GM12878 (cell line): ENCODE measurements at regions of chr12 and their contacts with region 1.

Region 1: DNA sequence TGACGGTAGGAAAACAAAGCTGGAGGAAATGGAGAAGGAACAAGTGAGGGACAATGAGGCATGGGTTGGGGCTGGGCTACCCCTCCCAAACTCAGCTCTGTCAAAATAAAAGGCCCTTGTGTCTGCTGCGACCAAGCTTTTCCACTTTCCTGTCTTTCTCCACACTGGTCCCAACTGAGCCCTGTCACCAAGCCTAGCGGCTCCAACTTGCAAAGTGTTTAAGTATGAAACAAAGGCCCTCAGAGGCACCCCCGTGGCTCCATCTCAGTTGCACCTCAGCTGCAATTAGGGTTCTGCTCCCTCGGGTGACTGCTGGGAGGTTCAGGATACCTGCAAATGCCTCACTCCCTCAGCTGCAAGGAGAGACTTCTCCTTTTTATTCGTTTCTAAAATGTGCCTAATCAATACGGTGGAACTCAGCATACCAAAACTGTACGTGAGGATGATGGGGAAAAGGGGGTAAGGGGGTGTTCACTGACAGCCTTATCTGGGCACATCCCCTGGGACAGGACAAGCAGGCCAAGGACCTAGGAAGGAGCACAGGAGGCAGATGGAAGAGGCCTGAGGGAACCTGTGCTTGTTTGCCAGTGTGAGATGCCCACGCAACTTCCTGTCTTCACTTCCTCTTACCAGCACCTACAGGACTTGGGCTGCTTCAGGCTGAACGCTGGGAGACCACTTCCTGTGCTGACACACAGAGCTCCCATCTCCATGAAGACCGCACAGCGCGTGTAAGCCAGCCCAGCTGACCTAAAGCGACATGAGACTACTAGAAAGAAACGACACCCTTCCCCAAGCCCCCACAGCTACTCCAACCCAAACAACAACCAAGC is 8.9 kb downstream of the VAMP1 start:
- DNase-seq: peak; percentile 95
- ATAC-seq: peak; percentile 92
- H3K4me3 ChIP-seq: peak overlapping the region; percentile 33; the same call in 1 of the 2 replicates
- H3K27ac ChIP-seq: peak overlapping the region; percentile 89
- H3K4me1 ChIP-seq: peaks cover 51% of the 10 kb centered on the region
- H3K27me3 ChIP-seq: no peaks in the 10 kb centered on the region
- CTCF ChIP-seq: no peak
- EP300 ChIP-seq: peak; percentile 63 to 88; a peak in 3 of 4 replicates
- POLR2A ChIP-seq: peak; percentile 72
- RAD21 ChIP-seq: no peak

Region 2: GRCh38 chr12:6323340-6323994 is 138.2 kb before region 1 on chr12:
- CTCF ChIA-PET with region 1: interaction called, 27 read pairs
- POLR2A ChIA-PET with region 1: interaction called, 3 read pairs
- RAD21 ChIA-PET with region 1: interaction called, 15 read pairs
- SMC1A ChIA-PET with region 1: interaction called, 14 read pairs
- in situ Hi-C with region 1: no loop called
- intact Hi-C with region 1: loop called (anchors 5 kb)
- DNase-seq: peak; percentile 71
- ATAC-seq: peak; percentile 87
- H3K4me3 ChIP-seq: no peak overlapping the region
- H3K27ac ChIP-seq: peak overlapping the region; percentile 79
- H3K4me1 ChIP-seq: peaks cover 31% of the 10 kb centered on the region
- H3K27me3 ChIP-seq: no peaks in the 10 kb centered on the region
- CTCF ChIP-seq: peak; percentile 38 to 45 (median 45); a peak in 5 of 6 replicates
- EP300 ChIP-seq: peak; percentile 46 to 53; a peak in 1 of 4 replicates
- POLR2A ChIP-seq: 0 out of 2 replicates have a peak, but pooled peaks have one; percentile 18
- RAD21 ChIP-seq: peak; percentile 34

Region 3: GRCh38 chr12:6434205-6435140 is 27.1 kb before region 1 on chr12:
- CTCF ChIA-PET with region 1: interaction called, 62 read pairs
- POLR2A ChIA-PET with region 1: interaction called, 384 read pairs
- RAD21 ChIA-PET with region 1: interaction called, 319 read pairs
- SMC1A ChIA-PET with region 1: interaction called, 59 read pairs
- in situ Hi-C with region 1: loop called (anchors 5 kb)
- intact Hi-C with region 1: no loop called
- DNase-seq: no peak
- ATAC-seq: peak; percentile 70
- H3K4me3 ChIP-seq: no peak overlapping the region
- H3K27ac ChIP-seq: peak overlapping the region; percentile 85
- H3K4me1 ChIP-seq: peaks cover 53% of the 10 kb centered on the region
- H3K27me3 ChIP-seq: no peaks in the 10 kb centered on the region
- CTCF ChIP-seq: no peak
- EP300 ChIP-seq: no peak
- POLR2A ChIP-seq: peak; percentile 56
- RAD21 ChIP-seq: no peak

Region 4: DNA sequence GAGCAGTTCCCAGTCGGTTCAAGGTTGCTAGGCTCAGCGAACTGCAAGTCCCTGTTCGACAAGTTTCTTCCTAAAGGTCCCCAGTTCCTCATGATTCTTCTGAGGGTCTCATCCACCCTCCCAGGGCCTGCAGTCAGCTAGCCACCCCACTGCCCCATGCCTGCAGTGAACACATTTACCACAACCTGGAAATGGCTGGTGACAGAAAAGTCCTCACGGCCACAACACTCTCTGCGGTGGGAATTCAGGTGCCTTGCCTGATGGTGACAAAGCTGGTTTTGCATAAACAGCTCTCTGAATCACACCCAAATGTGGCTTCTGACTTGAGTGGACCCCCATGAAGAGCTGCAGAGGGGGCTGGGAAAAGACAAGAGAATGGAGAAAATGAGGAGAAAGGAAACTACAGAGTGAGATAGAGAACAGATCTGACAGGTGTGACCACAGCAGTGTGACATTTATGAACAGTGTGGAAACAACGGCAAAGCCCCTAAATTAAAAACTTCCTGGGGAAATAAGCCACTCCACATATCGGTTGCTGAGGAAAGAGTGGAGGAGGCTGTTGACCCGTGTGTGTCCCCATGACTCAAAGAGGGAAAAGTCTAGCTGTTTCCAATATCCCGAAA is 18.1 kb before region 1 on chr12:
- CTCF ChIA-PET with region 1: interaction called, 79 read pairs
- POLR2A ChIA-PET with region 1: interaction called, 384 read pairs
- RAD21 ChIA-PET with region 1: interaction called, 319 read pairs
- SMC1A ChIA-PET with region 1: interaction called, 168 read pairs
- in situ Hi-C with region 1: no loop called
- intact Hi-C with region 1: loop called (anchors 2 kb)
- DNase-seq: no peak
- ATAC-seq: peak; percentile 47
- H3K4me3 ChIP-seq: peak overlapping the region; percentile 66
- H3K27ac ChIP-seq: peak overlapping the region; percentile 99
- H3K4me1 ChIP-seq: peaks cover 46% of the 10 kb centered on the region
- H3K27me3 ChIP-seq: no peaks in the 10 kb centered on the region
- CTCF ChIP-seq: no peak
- EP300 ChIP-seq: peak in 1 of 2 experiments; percentile 75; a peak in 2 of 4 replicates
- POLR2A ChIP-seq: peak; percentile 68
- RAD21 ChIP-seq: no peak

Region 5: GRCh38 chr12:6451348-6452244 is 10.0 kb before region 1 on chr12 and contains the start of gene TAPBPL:
- CTCF ChIA-PET with region 1: interaction called, 79 read pairs
- POLR2A ChIA-PET with region 1: interaction called, 384 read pairs
- RAD21 ChIA-PET with region 1: interaction called, 319 read pairs
- SMC1A ChIA-PET with region 1: interaction called, 168 read pairs
- in situ Hi-C with region 1: no loop called
- intact Hi-C with region 1: loop called (anchors 2 kb)
- DNase-seq: peak; percentile 75
- ATAC-seq: peak; percentile 84
- H3K4me3 ChIP-seq: peak within 1 kb of the TSS; percentile 83
- H3K27ac ChIP-seq: peak within 1 kb of the TSS; percentile 98
- H3K4me1 ChIP-seq: peaks cover 38% of the 10 kb centered on the region
- H3K27me3 ChIP-seq: no peaks in the 10 kb centered on the region
- CTCF ChIP-seq: no peak
- EP300 ChIP-seq: peak; percentile 18 to 46; a peak in 1 of 4 replicates
- POLR2A ChIP-seq: peak; percentile 82
- RAD21 ChIP-seq: no peak
- polyA plus RNA-seq, gene TAPBPL: 12.4 to 20.9 TPM